ENCODE measurements at regions of chr11 and their contacts with region 1.

Region 1: DNA sequence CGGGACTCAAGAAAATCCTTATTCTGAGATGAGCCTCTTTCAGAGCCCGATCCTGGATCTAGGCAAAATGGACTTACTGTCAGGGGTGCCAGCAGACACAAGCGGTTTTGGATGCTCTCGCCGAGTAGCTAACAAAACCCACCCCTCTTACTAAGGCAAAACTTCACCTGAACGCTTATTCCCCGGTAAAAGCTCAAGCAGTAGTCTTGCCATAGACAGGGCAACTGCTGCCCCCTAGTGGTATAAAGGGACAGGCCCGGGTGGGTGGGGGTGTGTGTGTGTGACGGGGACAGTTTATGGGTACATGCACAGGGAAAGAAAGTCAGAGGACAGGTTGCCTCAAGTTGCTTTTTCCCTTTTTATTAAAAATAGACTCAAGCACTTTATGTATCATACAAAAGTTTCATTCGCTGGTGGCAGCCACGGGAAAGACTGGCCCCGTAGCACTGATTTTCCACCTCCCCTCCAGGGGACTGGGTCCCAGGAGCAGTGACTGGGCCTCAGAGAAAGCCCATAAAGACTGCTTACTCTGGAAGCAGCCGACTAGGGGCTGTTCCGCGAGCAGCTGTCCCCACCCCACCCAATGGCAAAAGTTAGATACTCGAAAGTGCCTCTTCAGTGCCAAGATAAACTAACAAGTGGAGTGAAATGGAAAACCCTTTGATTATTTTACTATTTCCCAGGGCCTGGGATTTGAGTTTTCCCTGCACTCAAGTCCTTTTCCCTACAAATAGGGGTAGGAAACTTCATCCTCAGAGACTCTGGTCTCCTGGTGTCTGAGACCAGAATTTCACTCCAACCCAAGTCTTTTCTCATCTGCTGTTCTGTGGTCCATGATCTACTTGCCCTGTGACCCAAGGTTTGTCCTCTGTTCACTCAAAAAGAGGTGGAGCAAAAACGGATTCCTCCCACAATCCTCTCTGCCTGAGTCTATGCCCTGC is 4.7 kb downstream of the YPEL4 start:
- DNase-seq: peak; percentile 91
- ATAC-seq: peak; percentile 86
- H3K4me3 Mint-ChIP-seq: no peak overlapping the region
- H3K27ac Mint-ChIP-seq: no peak overlapping the region
- H3K4me1 Mint-ChIP-seq: peaks cover 51% of the 10 kb centered on the region
- H3K27me3 Mint-ChIP-seq: peaks cover 53% of the 10 kb centered on the region

Region 2: DNA sequence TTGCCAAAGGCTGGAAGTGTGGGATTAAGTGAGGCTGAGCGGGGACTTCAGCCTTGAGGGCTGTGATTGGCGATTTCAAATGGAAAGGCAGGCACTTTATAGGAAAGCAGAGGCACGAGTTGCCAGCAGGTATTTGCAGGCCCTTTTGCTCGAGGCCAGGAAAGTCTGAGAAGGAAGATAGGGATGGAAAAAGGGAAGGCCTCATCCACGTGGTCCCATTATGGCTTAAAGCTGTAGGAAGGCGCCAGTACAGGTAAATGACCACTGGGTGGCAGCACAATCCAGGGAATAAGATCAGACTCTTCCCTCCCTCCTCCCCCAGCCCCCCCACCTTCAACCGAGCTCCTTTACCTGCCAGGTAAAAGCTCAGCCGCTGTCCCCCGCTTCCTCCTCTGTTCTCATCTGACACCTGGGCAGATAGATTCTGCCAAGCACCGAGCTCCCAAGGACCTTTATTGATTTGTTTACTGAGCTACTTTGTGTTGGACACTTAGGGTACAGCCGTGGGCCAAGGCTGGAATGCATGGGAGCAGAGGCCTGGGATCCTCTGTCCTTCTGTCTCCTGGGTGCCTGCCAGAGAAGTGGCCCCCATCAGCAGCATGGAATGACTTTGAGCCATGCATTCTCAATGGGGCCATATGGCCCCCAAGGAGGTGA is 299.3 kb before region 1 on chr11:
- CTCF ChIA-PET with region 1: interaction called, 14 read pairs
- POLR2A ChIA-PET with region 1: no interaction called
- DNase-seq: peak; percentile 76
- ATAC-seq: peak; percentile 62
- H3K4me3 Mint-ChIP-seq: no peak overlapping the region
- H3K27ac Mint-ChIP-seq: no peak overlapping the region
- H3K4me1 Mint-ChIP-seq: peaks cover 3% of the 10 kb centered on the region
- H3K27me3 Mint-ChIP-seq: peaks cover under 1% of the 10 kb centered on the region

Region 3: GRCh38 chr11:57530596-57531507 is 114.2 kb before region 1 on chr11 and contains the start of gene TIMM10:
- CTCF ChIA-PET with region 1: interaction called, 40 read pairs
- POLR2A ChIA-PET with region 1: interaction called, 3 read pairs
- DNase-seq: peak; percentile 97
- ATAC-seq: peak; percentile 97
- H3K4me3 Mint-ChIP-seq: peak within 1 kb of the TSS; percentile 82
- H3K27ac Mint-ChIP-seq: peak within 1 kb of the TSS; percentile 88
- H3K4me1 Mint-ChIP-seq: peaks cover 47% of the 10 kb centered on the region
- H3K27me3 Mint-ChIP-seq: no peaks in the 10 kb centered on the region
- total RNA-seq, gene TIMM10: 65.4 to 65.8 TPM

Region 4: GRCh38 chr11:57562596-57562995 is 82.4 kb before region 1 on chr11:
- CTCF ChIA-PET with region 1: interaction called, 421 read pairs
- POLR2A ChIA-PET with region 1: interaction called, 34 read pairs
- DNase-seq: no peak
- ATAC-seq: no peak
- H3K4me3 Mint-ChIP-seq: no peak overlapping the region
- H3K27ac Mint-ChIP-seq: peak overlapping the region; percentile 70
- H3K4me1 Mint-ChIP-seq: peaks cover 37% of the 10 kb centered on the region
- H3K27me3 Mint-ChIP-seq: no peaks in the 10 kb centered on the region

Region 5: GRCh38 chr11:57604296-57605027 is 40.6 kb before region 1 on chr11:
- CTCF ChIA-PET with region 1: interaction called, 10 read pairs
- POLR2A ChIA-PET with region 1: no interaction called
- DNase-seq: peak; percentile 24
- ATAC-seq: no peak
- H3K4me3 Mint-ChIP-seq: no peak overlapping the region
- H3K27ac Mint-ChIP-seq: no peak overlapping the region
- H3K4me1 Mint-ChIP-seq: peaks cover 5% of the 10 kb centered on the region
- H3K27me3 Mint-ChIP-seq: peaks cover 27% of the 10 kb centered on the region

Region 6: GRCh38 chr11:57657194-57658022 is 12.4 kb after region 1 on chr11 and contains the start of gene CLP1:
- CTCF ChIA-PET with region 1: interaction called, 15 read pairs
- POLR2A ChIA-PET with region 1: no interaction called
- DNase-seq: peak; percentile 99
- ATAC-seq: peak; percentile 98
- H3K4me3 Mint-ChIP-seq: peak within 1 kb of the TSS; percentile 100
- H3K27ac Mint-ChIP-seq: peak within 1 kb of the TSS; percentile 96
- H3K4me1 Mint-ChIP-seq: peaks cover 46% of the 10 kb centered on the region
- H3K27me3 Mint-ChIP-seq: no peaks in the 10 kb centered on the region
- total RNA-seq, gene CLP1: 18.9 to 20.5 TPM

Region 7: GRCh38 chr11:57913715-57914704 is 269.0 kb after region 1 on chr11:
- CTCF ChIA-PET with region 1: no interaction called
- POLR2A ChIA-PET with region 1: no interaction called
- DNase-seq: no peak
- ATAC-seq: no peak
- H3K4me3 Mint-ChIP-seq: no peak overlapping the region
- H3K27ac Mint-ChIP-seq: no peak overlapping the region
- H3K4me1 Mint-ChIP-seq: no peaks in the 10 kb centered on the region
- H3K27me3 Mint-ChIP-seq: peaks cover 5% of the 10 kb centered on the region